Activated CD4-positive, alpha-beta T cell treated with anti-CD3 and anti-CD28 coated beads, Interleukin-2, amount 10 ng/mL, durations not matched to agents 7 days and 5 days (primary cell): ENCODE measurements at regions of chr1 and their contacts with region 1.

Region 1: DNA sequence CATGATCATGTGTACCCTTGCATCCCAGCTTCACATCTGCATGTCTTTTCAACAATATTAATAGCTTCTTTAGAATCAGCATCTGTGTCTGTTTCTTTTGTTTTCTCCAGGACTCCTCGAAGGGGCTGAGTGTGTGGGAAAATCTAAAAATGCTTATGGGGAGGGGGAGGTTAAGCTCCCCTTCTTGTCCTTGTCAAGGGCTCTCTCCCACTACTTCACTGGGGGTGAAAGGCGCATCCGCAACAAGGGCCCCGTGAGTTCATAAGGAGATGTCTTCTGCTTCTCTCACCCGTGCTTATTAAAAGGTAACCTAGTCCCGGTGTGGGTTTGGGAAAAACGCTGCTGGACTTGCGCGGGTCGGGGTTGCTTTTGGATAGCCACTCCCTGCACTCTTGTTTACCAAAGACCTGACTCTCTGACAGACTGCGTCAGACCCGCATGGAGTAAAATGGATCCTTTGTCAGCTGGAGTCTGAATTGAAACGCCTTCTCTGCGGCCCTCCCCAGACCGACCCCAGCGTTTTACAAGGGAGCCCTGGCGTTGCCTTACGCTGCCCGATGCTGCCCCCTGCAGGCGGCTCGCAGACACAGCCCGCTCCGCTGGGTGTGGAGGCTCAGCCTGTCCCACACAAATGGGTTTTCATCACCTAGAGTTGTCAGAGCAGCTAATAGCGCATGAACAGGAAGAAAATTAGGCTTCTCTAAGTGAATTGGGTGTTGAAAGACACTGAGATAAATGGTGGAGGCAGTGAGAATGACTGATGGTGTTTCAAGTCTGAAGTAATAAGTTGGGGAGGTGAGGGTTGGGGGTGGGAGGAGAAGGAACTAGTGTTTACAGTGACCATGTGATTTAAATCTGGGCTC is 53.8 kb downstream of the IER5 start:
- DNase-seq: peak; percentile 88
- H3K4me3 Mint-ChIP-seq: peak overlapping the region; percentile 14
- H3K27ac Mint-ChIP-seq: peak overlapping the region; percentile 56
- H3K4me1 Mint-ChIP-seq: peaks cover 60% of the 10 kb centered on the region
- H3K27me3 Mint-ChIP-seq: peaks cover 30% of the 10 kb centered on the region

Region 2: DNA sequence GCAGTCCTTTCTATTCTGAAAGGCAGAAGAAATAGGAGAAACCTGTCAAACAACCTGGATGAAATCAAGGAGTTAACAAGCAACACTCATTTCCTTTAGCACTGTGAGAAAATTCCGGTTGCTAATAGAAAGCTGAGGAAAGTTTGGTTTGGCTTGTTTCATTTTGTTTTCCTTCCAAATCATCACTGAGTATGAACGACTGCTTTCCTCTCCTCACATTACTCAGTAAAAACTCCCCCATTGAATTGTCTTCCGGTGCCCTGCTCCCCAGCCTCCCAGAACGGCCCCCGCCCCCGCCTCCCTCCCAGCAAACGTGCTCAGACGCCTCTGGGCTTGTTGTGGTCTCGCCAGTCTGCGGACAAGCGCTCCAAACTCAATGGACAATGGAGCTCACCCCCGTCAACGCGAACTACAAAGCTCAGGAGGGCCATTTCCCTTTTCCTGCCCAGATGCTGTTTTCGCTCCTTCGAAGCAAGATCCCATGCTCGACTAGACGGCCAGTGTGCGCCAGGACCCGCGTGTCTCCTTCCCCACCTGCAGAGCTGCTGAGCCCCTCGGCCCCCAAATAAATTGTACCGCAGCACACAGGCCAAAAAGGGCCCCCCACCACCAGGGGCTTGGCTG is 120.4 kb before region 1 on chr1:
- CTCF ChIA-PET with region 1: interaction called, 38 read pairs
- POLR2A ChIA-PET with region 1: no interaction called
- DNase-seq: peak; percentile 53
- H3K4me3 Mint-ChIP-seq: peak overlapping the region; percentile 93
- H3K27ac Mint-ChIP-seq: peak overlapping the region; percentile 93
- H3K4me1 Mint-ChIP-seq: peaks cover 49% of the 10 kb centered on the region
- H3K27me3 Mint-ChIP-seq: peaks cover 19% of the 10 kb centered on the region

Region 3: DNA sequence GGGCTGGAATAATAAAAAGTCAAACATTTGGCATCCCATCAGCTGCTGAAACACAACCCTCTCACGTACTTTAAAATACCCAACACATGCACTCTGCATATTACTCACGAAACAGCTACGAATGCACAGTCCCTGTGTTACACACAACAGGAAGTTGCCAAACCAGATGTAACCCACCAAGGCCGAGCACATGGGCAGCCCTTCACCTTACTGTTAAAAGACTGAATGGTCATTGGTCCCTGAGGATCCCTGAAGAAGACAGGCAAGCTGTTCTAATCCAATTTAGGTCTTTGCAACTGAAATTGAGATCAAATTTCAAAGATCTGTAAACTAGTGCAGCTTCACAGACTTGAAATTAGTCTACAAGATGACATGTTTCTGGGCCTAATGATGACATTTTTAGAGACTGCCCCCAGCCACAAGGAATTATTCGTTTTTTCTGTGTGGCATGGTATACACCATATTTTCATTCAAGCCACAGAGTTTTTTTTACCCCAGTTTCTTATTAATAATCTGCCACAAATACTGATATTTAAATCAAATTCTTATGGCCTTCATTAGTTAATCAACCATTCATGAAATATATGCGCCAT is 79.4 kb before region 1 on chr1:
- CTCF ChIA-PET with region 1: interaction called, 13 read pairs
- POLR2A ChIA-PET with region 1: no interaction called
- DNase-seq: peak; percentile 32
- H3K4me3 Mint-ChIP-seq: peak overlapping the region; percentile 17
- H3K27ac Mint-ChIP-seq: peak overlapping the region; percentile 89
- H3K4me1 Mint-ChIP-seq: peaks cover 18% of the 10 kb centered on the region
- H3K27me3 Mint-ChIP-seq: no peaks in the 10 kb centered on the region

Region 4: GRCh38 chr1:181088079-181089016 is 54.0 kb before region 1 on chr1 and contains the start of gene IER5:
- CTCF ChIA-PET with region 1: interaction called, 42 read pairs
- POLR2A ChIA-PET with region 1: interaction called, 7 read pairs
- DNase-seq: peak; percentile 96
- H3K4me3 Mint-ChIP-seq: peak within 1 kb of the TSS; percentile 99
- H3K27ac Mint-ChIP-seq: peak within 1 kb of the TSS; percentile 96
- H3K4me1 Mint-ChIP-seq: peaks cover 47% of the 10 kb centered on the region
- H3K27me3 Mint-ChIP-seq: peaks cover 4% of the 10 kb centered on the region
- total RNA-seq, gene IER5: 20.3 to 24.9 TPM

Region 5: GRCh38 chr1:181105134-181106021 is 36.9 kb before region 1 on chr1:
- CTCF ChIA-PET with region 1: interaction called, 45 read pairs
- POLR2A ChIA-PET with region 1: no interaction called
- DNase-seq: peak; percentile 93
- H3K4me3 Mint-ChIP-seq: peak overlapping the region; percentile 78
- H3K27ac Mint-ChIP-seq: peak overlapping the region; percentile 81
- H3K4me1 Mint-ChIP-seq: peaks cover 68% of the 10 kb centered on the region
- H3K27me3 Mint-ChIP-seq: peaks cover 39% of the 10 kb centered on the region

Region 6: DNA sequence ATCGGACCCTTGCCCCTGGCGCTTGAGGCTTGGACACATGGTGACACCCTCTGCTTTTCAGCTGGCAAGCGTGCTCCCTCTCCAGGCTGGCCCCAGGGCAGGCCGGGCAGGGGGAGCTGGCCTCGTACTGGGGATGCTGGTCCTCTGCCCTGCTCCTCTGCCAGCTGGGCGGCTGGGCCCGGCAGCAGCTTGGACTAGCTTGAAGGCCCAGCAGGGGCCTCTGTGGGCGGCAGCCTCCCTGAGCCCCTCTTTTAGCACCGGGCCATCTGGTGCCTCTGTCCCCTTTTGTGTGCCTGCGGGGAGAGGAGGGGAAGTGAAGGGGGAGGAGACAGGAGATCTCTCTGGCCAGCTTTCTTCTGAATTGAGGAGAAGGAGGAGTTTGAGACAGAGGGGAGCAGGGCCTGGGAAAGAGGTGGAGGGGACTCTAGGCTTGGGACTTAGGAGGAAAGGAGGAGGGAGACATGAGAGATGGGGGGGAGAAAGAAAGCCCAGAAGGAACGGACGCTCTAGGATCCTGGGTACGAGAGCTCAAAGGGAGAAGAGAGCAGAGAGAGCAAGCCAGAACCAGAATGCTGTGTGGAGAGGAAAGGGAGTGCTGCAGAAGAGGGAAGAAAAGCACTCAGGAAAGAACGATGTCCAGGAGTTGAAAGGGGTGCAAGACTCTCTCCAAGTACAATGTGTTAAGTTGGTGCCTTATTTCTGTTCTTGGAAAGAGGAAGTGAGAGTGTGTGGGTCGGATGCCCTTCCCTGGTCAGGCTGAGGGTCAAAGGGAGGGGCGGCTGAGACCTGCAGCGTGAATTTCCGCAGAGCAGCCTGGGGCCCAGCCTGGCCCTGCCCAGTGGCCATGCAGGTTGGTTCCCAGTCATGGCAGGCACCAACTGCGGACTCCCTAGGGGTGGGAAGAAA is 13.5 kb before region 1 on chr1:
- CTCF ChIA-PET with region 1: interaction called, 20 read pairs
- POLR2A ChIA-PET with region 1: no interaction called
- DNase-seq: no peak
- H3K4me3 Mint-ChIP-seq: no peak overlapping the region
- H3K27ac Mint-ChIP-seq: peak overlapping the region; percentile 15
- H3K4me1 Mint-ChIP-seq: peaks cover 40% of the 10 kb centered on the region
- H3K27me3 Mint-ChIP-seq: peaks cover 3% of the 10 kb centered on the region

Region 7: DNA sequence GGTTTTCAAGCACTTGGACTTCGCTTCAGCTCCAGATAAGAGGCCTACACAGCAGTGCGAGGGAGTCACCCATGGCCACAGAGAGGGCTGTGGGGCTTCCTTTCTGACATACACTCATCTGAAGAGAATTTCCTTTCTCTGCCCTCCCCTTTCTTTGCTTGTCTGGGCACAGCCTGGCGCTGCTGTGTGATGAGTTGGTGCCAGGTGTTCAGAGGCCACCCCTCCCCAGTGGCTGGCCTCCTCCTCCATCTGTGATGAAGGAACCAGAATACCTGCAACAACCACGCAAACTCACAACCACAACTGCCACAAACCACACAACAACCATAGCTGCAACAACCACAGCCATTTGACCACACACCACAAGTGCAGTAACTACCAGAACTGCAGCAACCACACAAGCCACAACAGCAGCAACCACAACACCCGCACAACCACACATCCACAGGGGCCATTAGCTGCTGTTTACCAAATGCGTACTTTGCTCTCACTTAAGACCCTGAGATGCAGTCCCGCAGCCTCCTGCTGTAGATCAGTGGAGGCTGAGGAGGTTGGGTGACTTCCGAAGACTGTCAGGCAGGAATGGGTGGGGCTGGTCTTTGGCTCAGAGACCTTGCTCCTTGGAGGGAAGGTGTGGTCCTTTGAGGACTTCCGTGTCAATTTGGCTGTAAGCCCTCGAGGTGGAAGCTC is 17.3 kb after region 1 on chr1:
- CTCF ChIA-PET with region 1: interaction called, 23 read pairs
- POLR2A ChIA-PET with region 1: no interaction called
- DNase-seq: peak; percentile 76
- H3K4me3 Mint-ChIP-seq: peak overlapping the region; percentile 60
- H3K27ac Mint-ChIP-seq: peak overlapping the region; percentile 89
- H3K4me1 Mint-ChIP-seq: peaks cover 39% of the 10 kb centered on the region
- H3K27me3 Mint-ChIP-seq: peaks cover 33% of the 10 kb centered on the region